Head of caudate nucleus (tissue), 42 donors: ENCODE measurements at regions of chr17 and their contacts with region 1.

Region 1: DNA sequence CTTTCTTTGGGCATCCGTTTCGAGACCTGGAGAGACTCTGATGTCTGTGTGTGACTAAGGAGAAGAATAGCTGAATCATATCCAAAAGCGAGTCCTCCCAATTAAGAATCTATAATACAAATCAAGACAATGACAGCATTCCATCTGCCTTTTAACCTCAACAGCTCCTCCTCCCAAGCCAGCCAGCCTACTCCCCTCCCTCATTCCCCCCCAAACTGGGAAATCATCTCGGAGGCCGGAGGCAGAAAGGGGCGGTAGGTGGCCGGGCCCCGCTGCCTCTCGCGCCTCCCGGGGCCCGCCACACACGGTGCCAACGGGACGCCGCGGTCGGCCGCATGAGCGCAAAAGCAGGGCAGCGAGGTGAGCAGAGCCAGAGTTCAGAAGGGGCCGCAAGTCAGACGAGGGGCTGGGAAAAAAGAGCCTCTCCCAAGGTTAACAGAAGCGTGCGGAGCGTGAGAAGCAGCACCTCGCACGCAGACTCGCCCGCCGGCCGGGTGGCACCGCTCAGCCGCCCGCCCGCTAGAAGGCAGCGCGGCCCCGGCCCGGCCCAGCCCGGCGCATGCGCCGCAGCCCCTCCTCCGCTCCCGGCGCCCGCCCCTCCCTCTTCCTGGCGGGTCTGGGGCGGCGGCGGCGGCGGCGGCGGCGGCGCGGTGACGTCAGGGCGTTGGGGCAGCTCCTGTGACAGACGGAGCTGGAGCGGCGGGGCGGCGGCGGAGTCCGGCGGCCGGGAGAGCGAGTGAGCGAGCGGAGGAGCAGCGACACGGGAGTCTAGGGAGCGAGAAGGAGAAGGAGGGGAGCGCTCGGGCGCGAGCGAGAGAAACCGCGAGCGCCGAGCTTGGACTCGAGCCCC is at the start of gene PAFAH1B1:
- DNase-seq: peak; percentile 70 to 97 (median 93)

Region 2: DNA sequence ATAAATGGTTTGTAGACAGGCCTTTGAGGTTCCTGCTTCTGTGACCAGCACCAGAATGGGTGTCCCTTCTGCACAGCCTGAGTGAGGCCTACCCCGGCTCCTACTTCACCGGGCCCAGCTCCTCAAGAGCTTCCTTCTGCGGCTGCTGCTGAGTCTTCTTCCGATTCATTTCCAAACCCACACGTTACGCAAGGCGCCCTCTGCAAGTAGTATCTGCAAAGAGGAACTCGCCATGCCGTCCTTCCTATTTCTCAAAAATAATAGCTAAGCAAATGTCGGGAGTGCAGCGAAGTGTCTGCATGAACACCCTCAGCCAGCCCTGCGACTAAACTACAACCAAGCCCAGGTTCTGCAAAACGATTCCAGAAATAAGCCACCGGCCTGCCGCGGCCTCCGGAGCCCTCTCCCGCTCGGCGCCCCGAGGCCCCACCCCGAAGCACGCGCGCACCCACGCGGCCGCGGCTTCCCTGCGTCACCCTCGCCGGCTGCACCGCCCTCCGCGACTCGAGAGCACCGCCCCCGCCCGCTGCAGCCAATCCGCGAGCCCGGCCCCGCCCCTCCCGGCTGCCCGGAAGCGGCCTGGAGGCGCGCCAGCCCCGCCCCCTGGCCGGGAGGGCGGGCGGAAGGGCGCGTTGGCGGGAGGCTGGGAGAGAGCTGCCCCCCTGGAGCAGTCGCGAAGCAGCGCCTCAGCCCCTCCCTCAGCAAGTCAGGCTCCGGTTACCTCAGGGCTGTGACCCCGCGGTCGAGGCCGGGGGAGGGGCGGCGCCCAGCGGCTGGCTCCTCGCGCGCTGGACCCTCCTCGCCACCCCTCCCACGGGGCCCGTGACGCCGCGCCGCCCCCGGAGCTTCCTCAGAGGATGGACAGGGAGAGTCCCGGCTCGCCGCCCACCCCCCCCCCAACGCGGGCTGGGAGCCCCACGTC is 200.7 kb before region 1 on chr17:
- intact Hi-C with region 1: loop called (anchors 5 kb)
- DNase-seq: peak; percentile 89 to 99 (median 98)

Region 3: GRCh38 chr17:2511462-2512369 is 81.5 kb before region 1 on chr17 and contains the start of gene METTL16:
- intact Hi-C with region 1: loop called (anchors 10 kb)
- DNase-seq: peak; percentile 90 to 100 (median 96)

Region 4: GRCh38 chr17:2711601-2712299 is 118.6 kb after region 1 on chr17 and contains the start of gene CLUH:
- intact Hi-C with region 1: loop called (anchors 10 kb)
- DNase-seq: peak; percentile 88 to 98 (median 95)

Region 5: GRCh38 chr17:2749784-2750181 is 156.6 kb after region 1 on chr17:
- intact Hi-C with region 1: no loop called
- DNase-seq: peak in 40 of 42 donors; percentile 9 to 83 (median 63)